HAP-1 (cell line): ENCODE measurements at regions of chr19 and their contacts with region 1.

Region 1: DNA sequence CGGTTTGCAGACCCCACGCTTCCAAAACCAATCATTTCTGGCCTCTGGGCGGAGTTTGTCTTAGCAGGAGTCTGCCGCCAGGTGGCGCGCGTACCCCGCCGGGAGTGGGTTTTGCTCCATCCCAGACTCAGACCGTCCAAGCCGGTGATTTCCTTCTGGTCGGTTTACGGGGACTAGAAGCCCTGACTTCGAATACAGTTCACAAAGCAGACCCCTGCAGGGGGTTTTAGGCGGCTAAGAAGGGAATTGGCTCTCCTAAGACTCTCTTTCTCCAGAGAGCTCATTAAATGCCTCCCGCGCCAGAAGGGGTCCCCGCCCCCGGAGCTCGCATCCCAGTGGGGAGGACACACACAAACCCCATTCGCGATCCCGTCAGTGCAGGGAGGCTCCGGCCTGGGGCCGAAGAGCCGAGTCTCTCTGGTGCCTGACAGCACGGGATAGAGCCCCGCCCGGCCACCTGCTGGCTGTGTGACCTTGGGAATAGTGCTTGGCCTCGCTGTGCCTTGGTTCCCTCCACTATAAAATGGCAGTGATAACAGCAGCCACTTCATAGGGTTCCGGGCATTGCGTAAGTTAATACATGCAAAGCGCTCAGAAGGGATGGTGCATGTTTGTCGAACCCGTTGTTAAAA is 8.6 kb upstream of the NUP62 start:
- DNase-seq: peak; percentile 70 to 90
- H3K4me3 ChIP-seq: peak overlapping the region; percentile 30
- H3K4me1 ChIP-seq: peaks cover 3% of the 10 kb centered on the region
- H3K27me3 ChIP-seq: peaks cover 4% of the 10 kb centered on the region; the same call in 1 of the 2 replicates

Region 2: GRCh38 chr19:49983645-49984229 is 45.9 kb after region 1 on chr19:
- in situ Hi-C with region 1: loop called (anchors 5 kb)
- DNase-seq: peak; percentile 26 to 85
- H3K4me3 ChIP-seq: no peak overlapping the region
- H3K4me1 ChIP-seq: no peaks in the 10 kb centered on the region
- H3K27me3 ChIP-seq: no peaks in the 10 kb centered on the region